ENCODE measurements at regions of chr6 and their contacts with region 1.

Region 1: DNA sequence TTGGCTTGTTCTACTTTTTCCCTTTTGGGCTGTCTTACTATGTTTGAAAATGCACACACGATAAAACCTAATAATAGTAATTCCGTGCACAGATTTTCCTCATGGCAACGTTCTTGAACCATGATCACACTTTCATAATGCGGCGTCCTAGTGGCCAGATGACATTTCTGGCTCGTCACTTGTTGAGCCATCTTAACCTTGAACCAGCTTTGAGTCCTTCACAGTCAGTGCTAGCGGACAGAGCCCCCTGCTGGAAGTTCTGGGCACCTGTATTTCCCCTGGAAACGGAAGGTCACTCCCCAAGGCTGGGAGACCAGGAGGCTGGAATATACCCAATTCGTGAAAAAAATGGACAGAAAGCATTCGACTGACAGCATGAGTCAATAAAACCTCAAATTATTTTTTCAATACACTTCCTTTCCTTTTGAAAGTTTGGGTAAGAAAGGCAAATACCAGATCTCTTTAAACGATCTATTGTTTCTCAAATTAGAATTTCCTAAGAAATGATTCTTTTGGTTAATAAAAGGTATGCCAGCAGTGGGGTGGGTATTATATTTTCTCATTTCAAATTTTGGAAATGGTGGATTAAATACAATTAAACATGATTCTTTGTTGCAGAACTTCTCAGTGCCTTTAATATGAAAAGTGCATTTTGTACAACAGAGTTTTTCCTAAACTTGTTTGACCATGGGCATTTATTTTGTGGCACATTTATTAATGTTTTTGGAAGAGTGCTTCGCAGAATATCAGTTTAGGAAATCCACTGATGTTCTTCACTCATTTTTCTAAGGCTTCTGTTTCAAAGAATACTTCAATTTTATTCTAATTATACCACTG is 542.3 kb downstream of the QKI start:
- DNase-seq: peak; percentile 34
- ATAC-seq: peak; percentile 99
- H3K4me3 ChIP-seq: no peak overlapping the region
- H3K27ac ChIP-seq: no peak overlapping the region
- H3K4me1 ChIP-seq: no peaks in the 10 kb centered on the region
- H3K27me3 ChIP-seq: no peaks in the 10 kb centered on the region
- CTCF ChIP-seq: peak; percentile 91 to 95 (median 91); a peak in 5 of 6 replicates
- EP300 ChIP-seq: no peak
- POLR2A ChIP-seq: no peak
- RAD21 ChIP-seq: peak; percentile 97

Region 2: DNA sequence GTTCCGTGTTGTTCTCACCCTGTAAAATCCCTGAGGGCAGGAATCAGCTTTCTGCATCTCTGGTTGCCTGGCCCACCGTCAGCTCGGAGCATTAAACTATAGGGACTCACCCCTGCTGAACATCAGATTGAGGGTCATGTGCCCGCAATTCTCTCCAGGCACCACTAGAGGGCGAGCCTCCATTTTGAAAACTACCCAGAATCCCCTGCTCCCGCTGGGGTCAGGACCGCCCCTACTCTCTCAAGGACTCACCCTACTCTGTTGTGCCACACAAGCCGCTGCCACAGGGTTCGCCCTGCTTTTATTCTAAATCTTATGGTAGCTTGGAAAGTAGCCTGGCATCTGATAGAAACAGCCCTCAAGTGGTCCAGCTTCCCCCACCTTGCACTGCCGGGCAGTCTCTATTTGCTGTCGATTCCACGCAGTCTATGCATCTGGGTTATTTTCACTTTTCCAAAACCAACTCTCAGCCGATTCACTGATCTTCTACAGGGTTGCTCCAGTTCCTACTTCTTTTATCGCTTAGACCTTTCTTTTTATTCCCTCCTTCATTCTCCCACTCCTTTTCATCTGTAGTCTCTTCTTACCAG is 786.4 kb before region 1 on chr6:
- CTCF ChIA-PET with region 1: interaction called, 5 read pairs
- POLR2A ChIA-PET with region 1: no interaction called
- RAD21 ChIA-PET with region 1: no interaction called
- SMC1A ChIA-PET with region 1: no interaction called
- in situ Hi-C with region 1: loop called (anchors 10 kb)
- intact Hi-C with region 1: no loop called
- DNase-seq: no peak
- ATAC-seq: peak; percentile 81
- H3K4me3 ChIP-seq: no peak overlapping the region
- H3K27ac ChIP-seq: no peak overlapping the region
- H3K4me1 ChIP-seq: no peaks in the 10 kb centered on the region
- H3K27me3 ChIP-seq: no peaks in the 10 kb centered on the region
- CTCF ChIP-seq: peak; percentile 53 to 68 (median 67)
- EP300 ChIP-seq: no peak
- POLR2A ChIP-seq: no peak
- RAD21 ChIP-seq: peak; percentile 37; the same call in 1 of the 2 replicates

Region 3: GRCh38 chr6:163413345-163414116 is 543.3 kb before region 1 on chr6:
- CTCF ChIA-PET with region 1: interaction called, 3 read pairs
- POLR2A ChIA-PET with region 1: no interaction called
- RAD21 ChIA-PET with region 1: interaction called, 3 read pairs
- SMC1A ChIA-PET with region 1: no interaction called
- in situ Hi-C with region 1: no loop called
- intact Hi-C with region 1: loop called (anchors 1 kb)
- DNase-seq: no peak
- ATAC-seq: peak; percentile 71
- H3K4me3 ChIP-seq: peak overlapping the region; percentile 70
- H3K27ac ChIP-seq: peak overlapping the region; percentile 63
- H3K4me1 ChIP-seq: no peaks in the 10 kb centered on the region; the same call in 1 of the 2 replicates
- H3K27me3 ChIP-seq: no peaks in the 10 kb centered on the region
- CTCF ChIP-seq: no peak
- EP300 ChIP-seq: no peak
- POLR2A ChIP-seq: peak; percentile 83
- RAD21 ChIP-seq: no peak

Region 4: DNA sequence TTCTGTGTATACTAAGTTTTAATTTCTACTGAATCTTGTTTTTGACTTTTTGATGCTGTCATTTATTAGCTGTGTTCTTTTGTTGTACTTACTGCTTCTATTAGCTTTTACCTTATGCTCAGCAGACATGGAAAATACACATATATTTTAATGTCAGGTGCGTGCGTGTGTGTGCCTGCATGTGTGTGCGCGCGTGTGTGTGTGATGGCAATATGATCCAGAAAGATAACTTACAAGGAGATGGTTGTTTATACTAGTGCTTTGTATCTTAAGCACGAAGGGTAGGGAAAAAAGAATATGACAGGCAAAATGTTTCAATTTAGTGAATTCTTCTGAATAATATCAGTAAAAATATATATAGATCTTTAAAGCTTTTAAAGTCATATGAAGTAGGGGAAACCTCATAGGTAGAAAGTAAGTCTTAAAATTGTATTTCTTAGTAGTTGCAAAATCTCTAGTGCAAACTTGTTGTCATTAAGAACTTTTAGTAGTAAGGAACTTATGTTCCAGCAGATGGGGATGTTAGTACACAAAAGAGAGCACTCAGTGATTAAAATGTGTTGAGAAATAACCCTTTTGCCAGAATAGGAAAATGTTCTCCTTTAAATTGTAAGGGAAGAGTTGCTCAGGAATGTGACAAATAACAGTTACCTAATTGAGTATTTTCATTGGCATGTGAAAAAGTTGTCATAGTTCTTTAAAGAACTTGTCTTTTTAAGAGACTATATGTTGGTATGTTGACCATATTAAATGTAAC is 529.1 kb before region 1 on chr6:
- CTCF ChIA-PET with region 1: interaction called, 8 read pairs
- POLR2A ChIA-PET with region 1: no interaction called
- RAD21 ChIA-PET with region 1: interaction called, 3 read pairs
- SMC1A ChIA-PET with region 1: no interaction called
- in situ Hi-C with region 1: loop called (anchors 5 kb)
- intact Hi-C with region 1: loop called (anchors 1 kb)
- DNase-seq: no peak
- ATAC-seq: peak; percentile 45; the same call in 2 of the 3 replicates
- H3K4me3 ChIP-seq: no peak overlapping the region
- H3K27ac ChIP-seq: no peak overlapping the region
- H3K4me1 ChIP-seq: no peaks in the 10 kb centered on the region
- H3K27me3 ChIP-seq: no peaks in the 10 kb centered on the region
- CTCF ChIP-seq: peak in 1 of 3 experiments; percentile 52; a peak in 2 of 6 replicates
- EP300 ChIP-seq: no peak
- POLR2A ChIP-seq: no peak
- RAD21 ChIP-seq: peak; percentile 76

Region 5: DNA sequence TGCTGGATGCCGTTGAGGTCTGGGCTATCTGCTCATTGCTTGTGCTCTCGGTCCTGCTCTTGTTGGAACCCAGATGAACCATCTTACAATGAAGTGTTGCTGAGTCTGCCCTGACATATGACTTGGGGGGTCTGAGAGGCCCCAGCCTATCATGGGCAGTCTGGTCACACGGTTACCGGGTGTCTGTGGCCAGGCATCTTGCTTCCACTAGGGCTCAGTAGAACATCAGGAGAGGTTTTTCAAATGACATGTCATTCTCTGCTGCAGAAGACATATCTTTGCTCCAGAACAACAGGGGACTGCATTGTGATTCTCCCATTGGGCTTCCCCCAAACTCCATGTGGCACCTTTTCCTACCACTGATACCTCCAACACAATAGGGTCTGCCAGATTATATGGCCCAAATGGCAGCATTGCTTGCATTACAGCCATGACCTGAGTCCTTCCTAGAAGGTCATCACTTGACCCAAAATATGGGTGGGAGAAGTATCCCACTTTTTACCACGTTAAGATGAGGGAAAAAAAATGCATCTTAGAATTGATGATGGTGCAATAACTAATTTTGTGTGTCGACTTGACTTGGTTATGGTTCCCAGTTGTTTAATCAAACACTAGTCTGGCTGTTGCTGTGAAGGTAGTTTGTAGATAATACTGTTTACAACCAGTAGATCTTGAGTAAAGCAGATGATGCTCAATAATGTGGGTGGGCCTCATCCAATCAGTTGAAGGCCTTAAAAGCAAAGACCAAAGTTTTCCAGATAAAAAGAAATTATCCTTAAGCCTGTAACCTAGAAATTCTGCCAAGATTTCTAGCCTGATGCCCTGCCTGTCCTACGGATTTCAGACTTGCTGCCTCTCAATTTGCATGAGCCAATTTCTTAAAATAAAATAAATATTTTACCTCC is 301.3 kb before region 1 on chr6:
- CTCF ChIA-PET with region 1: no interaction called
- POLR2A ChIA-PET with region 1: no interaction called
- RAD21 ChIA-PET with region 1: no interaction called
- SMC1A ChIA-PET with region 1: no interaction called
- in situ Hi-C with region 1: no loop called
- intact Hi-C with region 1: loop called (anchors 1 kb)
- DNase-seq: no peak
- ATAC-seq: peak; percentile 41; the same call in 2 of the 3 replicates
- H3K4me3 ChIP-seq: no peak overlapping the region
- H3K27ac ChIP-seq: no peak overlapping the region
- H3K4me1 ChIP-seq: no peaks in the 10 kb centered on the region; the same call in 1 of the 2 replicates
- H3K27me3 ChIP-seq: no peaks in the 10 kb centered on the region
- CTCF ChIP-seq: peak; percentile 15 to 29 (median 21); a peak in 3 of 6 replicates
- EP300 ChIP-seq: no peak
- POLR2A ChIP-seq: no peak
- RAD21 ChIP-seq: peak; percentile 60

Region 6: DNA sequence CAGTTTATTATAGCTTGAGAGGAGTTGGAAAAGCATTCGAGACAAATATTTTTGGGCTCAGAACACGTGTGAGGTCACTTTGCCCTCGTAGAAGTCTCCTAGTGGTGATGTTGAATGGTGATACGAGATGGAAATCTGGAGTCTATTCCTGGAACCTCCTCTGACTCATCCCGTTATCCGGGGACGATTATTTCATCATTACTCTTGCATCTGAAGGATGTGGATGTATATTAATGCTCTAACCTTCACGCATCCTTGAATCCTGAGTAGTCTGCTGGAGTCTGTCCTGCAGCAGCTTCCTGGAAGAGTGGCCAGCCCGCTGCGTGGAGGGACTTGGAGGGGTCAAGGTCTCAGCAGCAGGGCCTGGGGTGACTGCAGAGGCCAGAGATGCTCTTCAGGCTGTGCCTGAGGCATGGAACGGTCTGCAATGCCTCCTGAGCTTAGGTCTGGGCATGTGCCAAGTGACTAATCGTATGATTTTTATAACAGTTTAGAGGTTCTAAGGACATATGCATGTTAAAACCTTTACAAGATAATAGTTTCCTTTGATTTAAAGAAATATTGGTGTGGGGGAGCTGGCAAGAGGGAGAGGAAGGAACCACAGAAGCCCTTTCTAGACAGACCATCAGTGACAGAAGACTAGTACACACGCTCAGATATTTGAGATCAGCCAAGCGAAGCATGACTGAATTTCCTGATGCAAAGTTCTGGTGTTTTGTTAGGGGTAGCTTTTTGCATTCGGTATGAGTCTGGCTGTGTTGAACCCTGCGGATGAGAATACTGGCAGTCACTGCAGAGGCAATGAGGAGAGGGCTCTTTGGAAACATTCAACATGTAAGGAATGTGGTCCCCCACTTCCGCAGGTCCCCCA is 142.1 kb before region 1 on chr6:
- CTCF ChIA-PET with region 1: no interaction called
- POLR2A ChIA-PET with region 1: no interaction called
- RAD21 ChIA-PET with region 1: no interaction called
- SMC1A ChIA-PET with region 1: no interaction called
- in situ Hi-C with region 1: no loop called
- intact Hi-C with region 1: no loop called
- DNase-seq: peak; percentile 34
- ATAC-seq: no peak
- H3K4me3 ChIP-seq: no peak overlapping the region
- H3K27ac ChIP-seq: no peak overlapping the region
- H3K4me1 ChIP-seq: peaks cover 9% of the 10 kb centered on the region
- H3K27me3 ChIP-seq: no peaks in the 10 kb centered on the region
- CTCF ChIP-seq: no peak
- EP300 ChIP-seq: no peak
- POLR2A ChIP-seq: no peak
- RAD21 ChIP-seq: no peak

Region 7: GRCh38 chr6:163971841-163972838 is 15.4 kb after region 1 on chr6:
- CTCF ChIA-PET with region 1: no interaction called
- POLR2A ChIA-PET with region 1: no interaction called
- RAD21 ChIA-PET with region 1: no interaction called
- SMC1A ChIA-PET with region 1: no interaction called
- in situ Hi-C with region 1: no loop called
- intact Hi-C with region 1: no loop called
- DNase-seq: no peak
- ATAC-seq: no peak
- H3K4me3 ChIP-seq: no peak overlapping the region
- H3K27ac ChIP-seq: no peak overlapping the region
- H3K4me1 ChIP-seq: no peaks in the 10 kb centered on the region
- H3K27me3 ChIP-seq: no peaks in the 10 kb centered on the region
- CTCF ChIP-seq: no peak
- EP300 ChIP-seq: no peak
- POLR2A ChIP-seq: no peak
- RAD21 ChIP-seq: no peak

Region 8: GRCh38 chr6:164927288-164928056 is 970.7 kb after region 1 on chr6:
- CTCF ChIA-PET with region 1: interaction called, 3 read pairs
- POLR2A ChIA-PET with region 1: no interaction called
- RAD21 ChIA-PET with region 1: no interaction called
- SMC1A ChIA-PET with region 1: no interaction called
- in situ Hi-C with region 1: no loop called
- intact Hi-C with region 1: loop called (anchors 5 kb)
- DNase-seq: no peak
- ATAC-seq: peak; percentile 99
- H3K4me3 ChIP-seq: no peak overlapping the region
- H3K27ac ChIP-seq: no peak overlapping the region
- H3K4me1 ChIP-seq: no peaks in the 10 kb centered on the region
- H3K27me3 ChIP-seq: no peaks in the 10 kb centered on the region
- CTCF ChIP-seq: peak; percentile 65 to 97 (median 84)
- EP300 ChIP-seq: no peak
- POLR2A ChIP-seq: no peak
- RAD21 ChIP-seq: peak; percentile 93